Right ventricle myocardium inferior (tissue), 1 donor: ENCODE measurements at regions of chr13 and their contacts with region 1.

Region 1: GRCh38 chr13:33205804-33206221 is 79.7 kb downstream of the STARD13 start:
- DNase-seq: no peak
- ATAC-seq: no peak

Region 2: DNA sequence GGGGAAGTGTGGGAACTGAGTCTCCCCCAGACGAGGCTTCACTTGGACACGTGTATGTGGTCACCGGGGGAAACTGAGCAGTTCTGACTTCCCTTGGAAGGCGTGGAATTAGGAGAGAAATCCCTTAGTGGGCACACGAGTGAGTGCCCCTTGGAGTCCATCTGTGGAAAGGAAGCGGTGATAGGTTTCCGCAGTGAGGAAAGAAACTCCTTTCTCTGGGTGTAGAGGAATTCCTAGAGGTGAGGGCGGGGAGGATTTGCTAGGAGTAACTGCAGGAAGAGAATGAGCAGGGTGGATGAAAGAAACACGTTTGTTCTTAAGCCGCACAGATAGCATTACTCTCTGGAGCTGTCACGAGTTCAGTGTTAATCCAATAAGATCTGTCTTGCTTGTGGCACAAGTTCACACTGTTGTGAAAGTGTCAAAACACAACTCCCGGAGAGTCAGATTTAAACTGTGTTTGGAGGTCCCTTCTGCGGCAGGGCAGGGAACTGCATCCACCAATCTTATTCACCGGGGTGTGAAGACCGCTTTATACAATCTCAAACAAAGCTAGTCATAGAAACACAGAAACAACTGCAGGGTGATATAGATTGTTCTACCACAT is 188.4 kb before region 1 on chr13:
- intact Hi-C with region 1: no loop called
- DNase-seq: no peak
- ATAC-seq: peak; percentile 86

Region 3: GRCh38 chr13:33125821-33126570 is 79.8 kb before region 1 on chr13:
- intact Hi-C with region 1: loop called (anchors 5 kb)
- DNase-seq: peak; percentile 59
- ATAC-seq: peak; percentile 92